IMR-90 (cell line): ENCODE measurements at regions of chr4 and their contacts with region 1.

Region 1: GRCh38 chr4:135277068-135277979 is 1075.7 kb upstream of the PABPC4L start:
- DNase-seq: peak; percentile 77
- ATAC-seq: peak; percentile 81
- H3K4me3 ChIP-seq: no peak overlapping the region
- H3K27ac ChIP-seq: no peak overlapping the region
- H3K4me1 ChIP-seq: peaks cover 10% of the 10 kb centered on the region
- H3K27me3 ChIP-seq: no peaks in the 10 kb centered on the region
- CTCF ChIP-seq: no peak
- POLR2A ChIP-seq: no peak
- RAD21 ChIP-seq: no peak

Region 2: GRCh38 chr4:134591326-134591725 is 686.0 kb before region 1 on chr4:
- CTCF ChIA-PET with region 1: no interaction called
- POLR2A ChIA-PET with region 1: no interaction called
- dilution Hi-C with region 1: no loop called
- in situ Hi-C with region 1: no loop called
- intact Hi-C with region 1: no loop called
- DNase-seq: no peak
- ATAC-seq: no peak
- H3K4me3 ChIP-seq: no peak overlapping the region
- H3K27ac ChIP-seq: no peak overlapping the region
- H3K4me1 ChIP-seq: no peaks in the 10 kb centered on the region
- H3K27me3 ChIP-seq: no peaks in the 10 kb centered on the region
- CTCF ChIP-seq: no peak
- POLR2A ChIP-seq: no peak
- RAD21 ChIP-seq: no peak

Region 3: DNA sequence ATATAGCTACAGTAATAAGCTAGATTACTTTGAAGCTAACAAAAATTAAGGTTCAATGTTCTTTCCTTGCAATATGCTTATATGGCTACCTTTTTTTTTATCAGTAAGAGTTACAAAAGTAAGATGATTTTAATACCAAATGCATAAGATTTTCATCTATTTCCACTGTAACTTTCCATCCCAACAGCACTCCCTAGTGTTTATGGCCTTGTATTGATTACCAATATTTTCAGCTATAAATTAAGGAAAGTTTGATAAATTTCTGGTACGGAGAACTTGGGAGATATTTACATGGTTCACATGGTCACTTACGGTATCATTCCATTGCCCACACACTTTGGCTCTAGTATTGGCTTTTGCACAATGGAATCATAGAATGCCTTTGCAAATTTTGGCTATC is 626.9 kb before region 1 on chr4:
- CTCF ChIA-PET with region 1: interaction called, 13 read pairs
- POLR2A ChIA-PET with region 1: no interaction called
- dilution Hi-C with region 1: no loop called
- in situ Hi-C with region 1: no loop called
- intact Hi-C with region 1: no loop called
- DNase-seq: no peak
- ATAC-seq: no peak
- H3K4me3 ChIP-seq: no peak overlapping the region
- H3K27ac ChIP-seq: no peak overlapping the region
- H3K4me1 ChIP-seq: no peaks in the 10 kb centered on the region
- H3K27me3 ChIP-seq: no peaks in the 10 kb centered on the region
- CTCF ChIP-seq: no peak
- POLR2A ChIP-seq: no peak
- RAD21 ChIP-seq: no peak

Region 4: GRCh38 chr4:135492439-135492838 is 215.1 kb after region 1 on chr4:
- CTCF ChIA-PET with region 1: no interaction called
- POLR2A ChIA-PET with region 1: no interaction called
- dilution Hi-C with region 1: no loop called
- in situ Hi-C with region 1: no loop called
- intact Hi-C with region 1: no loop called
- DNase-seq: no peak
- ATAC-seq: no peak
- H3K4me3 ChIP-seq: no peak overlapping the region
- H3K27ac ChIP-seq: no peak overlapping the region
- H3K4me1 ChIP-seq: no peaks in the 10 kb centered on the region
- H3K27me3 ChIP-seq: no peaks in the 10 kb centered on the region
- CTCF ChIP-seq: no peak
- POLR2A ChIP-seq: no peak
- RAD21 ChIP-seq: no peak